CD14-positive monocyte (primary cell): ENCODE measurements at regions of chr6 and their contacts with region 1.

Region 1: GRCh38 chr6:31665501-31666336 is at the start of gene CSNK2B:
- DNase-seq: peak; percentile 96 to 97 (median 96)
- H3K4me3 ChIP-seq: peak within 1 kb of the TSS; percentile 87 to 94 (median 90)
- H3K4me3 Mint-ChIP-seq: peak within 1 kb of the TSS; percentile 93 to 98
- H3K27ac ChIP-seq: peak within 1 kb of the TSS; percentile 93 to 95
- H3K27ac Mint-ChIP-seq: peak within 1 kb of the TSS; percentile 96 to 98 (median 98)
- H3K4me1 ChIP-seq: peaks cover 48 to 60% of the 10 kb centered on the region in 2 donors
- H3K4me1 Mint-ChIP-seq: peaks cover 53% of the 10 kb centered on the region
- H3K27me3 ChIP-seq: no peaks in the 10 kb centered on the region
- H3K27me3 Mint-ChIP-seq: peaks cover 0 to 1% (median 0%) of the 10 kb centered on the region in 3 donors
- CTCF ChIP-seq: no peak
- polyA plus RNA-seq, gene CSNK2B: 147 to 227 (median 195) TPM

Region 2: GRCh38 chr6:31122791-31123706 is 542.7 kb before region 1 on chr6:
- intact Hi-C with region 1: no loop called
- DNase-seq: no peak
- H3K4me3 ChIP-seq: no peak overlapping the region
- H3K4me3 Mint-ChIP-seq: no peak overlapping the region
- H3K27ac ChIP-seq: no peak overlapping the region
- H3K27ac Mint-ChIP-seq: no peak overlapping the region
- H3K4me1 ChIP-seq: no peaks in the 10 kb centered on the region
- H3K4me1 Mint-ChIP-seq: peaks cover 8% of the 10 kb centered on the region
- H3K27me3 ChIP-seq: no peaks in the 10 kb centered on the region
- H3K27me3 Mint-ChIP-seq: peaks cover 4 to 13% (median 7%) of the 10 kb centered on the region in 3 donors
- CTCF ChIP-seq: no peak

Region 3: DNA sequence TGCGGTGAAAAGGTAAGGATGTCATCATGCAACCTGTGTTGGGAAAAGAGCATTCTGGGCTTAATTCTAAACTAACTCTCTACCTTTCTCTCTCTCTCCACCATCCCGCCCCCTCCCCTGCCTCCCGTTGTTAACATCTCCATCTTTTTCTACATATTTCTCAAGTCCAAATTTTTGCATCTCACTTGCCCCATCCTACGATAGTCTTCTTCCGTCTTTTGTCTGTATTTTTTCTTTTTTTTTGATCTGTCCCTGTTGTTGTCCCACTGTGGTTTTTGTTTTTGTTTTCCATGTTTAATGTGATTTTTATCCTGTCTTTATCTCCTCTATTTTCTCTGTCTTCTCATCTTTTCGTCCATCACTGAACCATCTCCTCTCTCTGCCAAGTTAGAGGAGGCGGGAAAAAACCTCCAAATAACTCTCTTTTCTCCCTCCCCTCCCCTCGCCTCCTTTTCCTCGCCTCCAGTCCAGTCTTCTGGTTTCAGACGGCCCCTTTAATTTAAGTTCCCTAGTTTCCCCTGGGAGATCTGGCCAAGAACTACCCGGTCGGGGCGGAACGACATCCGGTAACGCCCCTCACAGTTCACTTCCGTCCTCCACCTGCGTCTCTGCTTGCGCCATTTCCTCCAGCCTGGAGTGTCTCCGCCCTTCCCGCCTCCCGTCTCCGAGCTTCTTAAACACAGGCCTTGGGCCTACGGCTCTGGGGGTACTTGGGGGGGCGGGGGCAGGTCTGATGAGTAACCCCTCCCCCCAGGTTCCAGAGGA is 118.6 kb before region 1 on chr6 and contains the start of gene NFKBIL1:
- intact Hi-C with region 1: loop called (anchors 5 kb)
- DNase-seq: peak; percentile 87 to 95 (median 92)
- H3K4me3 ChIP-seq: peak within 1 kb of the TSS; percentile 33 to 71 (median 34)
- H3K4me3 Mint-ChIP-seq: peak within 1 kb of the TSS; percentile 65 to 86
- H3K27ac ChIP-seq: peak within 1 kb of the TSS; percentile 54 to 68
- H3K27ac Mint-ChIP-seq: peak within 1 kb of the TSS; percentile 86 to 96 (median 92)
- H3K4me1 ChIP-seq: peaks cover 36 to 45% of the 10 kb centered on the region in 2 donors
- H3K4me1 Mint-ChIP-seq: peaks cover 45% of the 10 kb centered on the region
- H3K27me3 ChIP-seq: no peaks in the 10 kb centered on the region
- H3K27me3 Mint-ChIP-seq: no peaks in the 10 kb centered on the region
- CTCF ChIP-seq: peak; percentile 52
- polyA plus RNA-seq, gene NFKBIL1: 7.7 to 10.3 (median 8.0) TPM

Region 4: DNA sequence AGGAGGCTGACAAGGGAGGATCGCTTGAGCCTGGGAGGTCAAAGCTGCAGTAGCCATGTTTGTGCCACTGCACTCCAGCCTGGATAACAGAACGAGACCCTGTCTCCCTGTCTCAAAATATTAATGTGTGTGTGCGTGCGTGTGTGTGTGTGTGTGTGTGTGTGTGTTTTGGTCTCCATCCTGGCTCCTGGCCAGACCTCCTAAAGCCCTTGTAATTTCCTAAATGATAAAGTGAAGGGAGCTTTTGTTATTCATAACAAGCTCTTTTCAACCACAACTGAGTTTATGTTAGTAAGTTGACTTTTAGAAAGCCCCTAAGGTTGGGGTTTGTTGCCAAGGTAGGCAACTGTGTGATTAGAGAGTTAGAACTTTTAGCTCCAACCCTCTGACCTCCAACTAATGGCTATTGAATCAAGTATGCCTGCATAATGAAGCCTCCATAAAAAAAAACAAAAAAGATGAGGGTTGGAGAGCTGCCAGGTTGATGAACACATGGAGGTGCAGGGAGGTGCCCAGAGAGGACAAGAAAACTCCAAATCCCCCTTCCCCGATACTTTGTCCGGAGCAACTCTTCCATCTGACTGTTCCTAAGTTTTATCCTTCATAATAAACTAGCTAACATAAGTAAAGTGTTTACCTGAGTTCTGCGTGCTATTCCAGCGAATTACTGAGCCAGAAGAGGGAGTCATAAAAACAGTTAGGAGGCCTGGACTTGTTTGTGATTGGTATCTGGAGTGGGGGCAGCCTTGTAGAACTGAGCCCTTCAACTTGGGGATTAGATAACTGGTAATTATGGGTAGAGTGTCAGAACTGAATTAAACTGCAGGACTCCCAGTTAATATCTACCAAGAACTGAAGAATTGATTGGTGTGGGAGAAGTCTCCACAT is 56.0 kb before region 1 on chr6:
- intact Hi-C with region 1: no loop called
- DNase-seq: no peak
- H3K4me3 ChIP-seq: no peak overlapping the region
- H3K4me3 Mint-ChIP-seq: no peak overlapping the region
- H3K27ac ChIP-seq: no peak overlapping the region
- H3K27ac Mint-ChIP-seq: peak overlapping the region in 2 of 7 donors; percentile 7 to 26
- H3K4me1 ChIP-seq: peaks cover 19 to 25% of the 10 kb centered on the region in 2 donors
- H3K4me1 Mint-ChIP-seq: peaks cover 21% of the 10 kb centered on the region
- H3K27me3 ChIP-seq: no peaks in the 10 kb centered on the region
- H3K27me3 Mint-ChIP-seq: peaks cover 0 to 4% (median 0%) of the 10 kb centered on the region in 3 donors
- CTCF ChIP-seq: no peak

Region 5: GRCh38 chr6:31652925-31653718 is 12.6 kb before region 1 on chr6:
- intact Hi-C with region 1: loop called (anchors 1 kb)
- DNase-seq: peak in 1 of 3 donors; percentile 83
- H3K4me3 ChIP-seq: peak overlapping the region; percentile 48 to 87 (median 76)
- H3K4me3 Mint-ChIP-seq: peak overlapping the region; percentile 93 to 99
- H3K27ac ChIP-seq: peak overlapping the region; percentile 95 to 98
- H3K27ac Mint-ChIP-seq: peak overlapping the region; percentile 99 to 100 (median 100)
- H3K4me1 ChIP-seq: peaks cover 20 to 40% of the 10 kb centered on the region in 2 donors
- H3K4me1 Mint-ChIP-seq: peaks cover 39% of the 10 kb centered on the region
- H3K27me3 ChIP-seq: no peaks in the 10 kb centered on the region
- H3K27me3 Mint-ChIP-seq: peaks cover 0 to 10% (median 5%) of the 10 kb centered on the region in 3 donors
- CTCF ChIP-seq: no peak

Region 6: GRCh38 chr6:31739639-31740396 is 74.1 kb after region 1 on chr6 and contains the start of gene MSH5:
- intact Hi-C with region 1: loop called in 1 of 2 experiments (anchors 5 kb)
- DNase-seq: peak; percentile 97 to 100 (median 98)
- H3K4me3 ChIP-seq: peak within 1 kb of the TSS; percentile 58 to 100 (median 71)
- H3K4me3 Mint-ChIP-seq: peak within 1 kb of the TSS; percentile 92 to 98
- H3K27ac ChIP-seq: peak within 1 kb of the TSS; percentile 91 to 99
- H3K27ac Mint-ChIP-seq: peak within 1 kb of the TSS; percentile 95 to 100 (median 99)
- H3K4me1 ChIP-seq: peaks cover 42 to 54% of the 10 kb centered on the region in 2 donors
- H3K4me1 Mint-ChIP-seq: peaks cover 50% of the 10 kb centered on the region
- H3K27me3 ChIP-seq: no peaks in the 10 kb centered on the region
- H3K27me3 Mint-ChIP-seq: peaks cover 0 to 2% (median 2%) of the 10 kb centered on the region in 3 donors
- CTCF ChIP-seq: no peak
- polyA plus RNA-seq, gene MSH5: 0.58 to 31.2 (median 1.9) TPM